ENCODE measurements at regions of chr9 and their contacts with region 1.

Region 1: GRCh38 chr9:126558051-126558665 is 55.6 kb upstream of the LMX1B start:
- DNase-seq: peak; percentile 22
- ATAC-seq: peak; percentile 66
- H3K4me3 ChIP-seq: no peak overlapping the region
- H3K27ac ChIP-seq: no peak overlapping the region
- H3K4me1 ChIP-seq: no peaks in the 10 kb centered on the region
- H3K27me3 ChIP-seq: peaks cover 37% of the 10 kb centered on the region
- CTCF ChIP-seq: peak; percentile 87
- POLR2A ChIP-seq: no peak
- RAD21 ChIP-seq: peak; percentile 82

Region 2: DNA sequence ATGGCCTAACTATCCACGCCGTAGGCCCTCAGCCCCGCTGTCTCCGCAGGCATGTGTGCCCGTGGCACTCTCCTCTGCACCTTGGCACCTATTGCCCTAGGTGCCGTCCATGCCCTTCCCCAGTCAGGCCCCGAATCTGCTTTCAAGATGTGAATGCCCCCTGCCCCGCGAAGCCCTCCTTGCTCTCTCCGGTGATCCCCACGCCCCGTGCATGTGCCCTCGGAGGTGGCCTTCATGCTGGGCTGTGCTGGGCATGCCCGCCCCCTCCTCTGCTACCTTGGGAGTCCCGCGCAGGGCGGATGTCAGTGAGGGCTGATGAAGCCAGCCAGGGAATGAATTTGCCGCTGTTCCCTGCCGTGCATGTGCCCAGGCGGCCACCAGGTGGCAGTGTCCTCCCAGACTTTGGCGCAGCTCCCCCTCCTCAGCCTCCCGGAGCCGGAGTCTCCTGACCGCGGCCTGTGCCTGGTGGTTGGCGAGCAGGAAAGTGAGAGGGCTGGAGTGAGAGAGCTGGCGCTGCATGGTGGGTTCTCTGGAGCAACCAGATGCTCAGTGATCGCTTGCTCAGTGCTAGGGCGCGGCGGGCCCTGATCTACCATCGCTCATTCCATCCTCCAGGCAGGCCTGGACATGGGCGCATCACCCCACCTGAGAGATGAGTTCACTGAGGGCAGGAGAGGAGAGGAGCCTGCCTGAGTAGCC is 57.3 kb before region 1 on chr9:
- CTCF ChIA-PET with region 1: no interaction called
- POLR2A ChIA-PET with region 1: no interaction called
- dilution Hi-C with region 1: no loop called
- in situ Hi-C with region 1: loop called (anchors 5 kb)
- intact Hi-C with region 1: loop called (anchors 1 kb)
- DNase-seq: peak; percentile 70
- ATAC-seq: peak; percentile 79
- H3K4me3 ChIP-seq: no peak overlapping the region
- H3K27ac ChIP-seq: no peak overlapping the region
- H3K4me1 ChIP-seq: peaks cover 4% of the 10 kb centered on the region; the same call in 1 of the 2 replicates
- H3K27me3 ChIP-seq: no peaks in the 10 kb centered on the region; the same call in 1 of the 2 replicates
- CTCF ChIP-seq: peak; percentile 96
- POLR2A ChIP-seq: no peak
- RAD21 ChIP-seq: peak; percentile 88